Dendritic cell treated with granulocyte-macrophage colony-stimulating factor and Interleukin-4, amounts not matched to agents 40 ng/mL and 50 ng/mL, for 4 days (primary cell): ENCODE measurements at regions of chr1 and their contacts with region 1.

Region 1: DNA sequence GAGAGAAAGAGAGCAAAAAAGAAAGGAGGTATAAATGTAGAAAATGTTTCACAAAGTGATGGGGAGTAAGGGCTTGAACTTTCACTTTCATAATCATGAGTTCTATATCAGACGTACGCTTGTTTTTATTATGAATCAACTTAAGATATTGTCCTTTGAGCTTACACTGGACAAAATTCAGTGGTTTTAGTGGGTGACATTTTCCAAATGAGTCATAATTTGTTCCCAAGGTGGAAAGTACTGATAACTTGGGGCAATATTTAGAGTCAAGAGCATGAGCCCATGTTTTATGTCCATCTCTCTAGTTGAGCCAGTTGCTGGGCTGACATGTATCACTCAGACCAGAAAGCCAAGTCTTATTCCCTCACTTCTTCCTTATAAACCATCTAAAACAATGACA is 161.6 kb downstream of the CHRM3 start:
- H3K4me3 Mint-ChIP-seq: peak overlapping the region; percentile 40
- H3K27ac Mint-ChIP-seq: no peak overlapping the region
- H3K4me1 Mint-ChIP-seq: peaks cover 7% of the 10 kb centered on the region
- H3K27me3 Mint-ChIP-seq: no peaks in the 10 kb centered on the region

Region 2: GRCh38 chr1:239527051-239527693 is 20.8 kb before region 1 on chr1:
- intact Hi-C with region 1: loop called (anchors 1 kb)
- H3K4me3 Mint-ChIP-seq: no peak overlapping the region
- H3K27ac Mint-ChIP-seq: no peak overlapping the region
- H3K4me1 Mint-ChIP-seq: peaks cover under 1% of the 10 kb centered on the region
- H3K27me3 Mint-ChIP-seq: no peaks in the 10 kb centered on the region

Region 3: GRCh38 chr1:239778221-239778813 is 230.3 kb after region 1 on chr1:
- intact Hi-C with region 1: no loop called
- H3K4me3 Mint-ChIP-seq: no peak overlapping the region
- H3K27ac Mint-ChIP-seq: no peak overlapping the region
- H3K4me1 Mint-ChIP-seq: no peaks in the 10 kb centered on the region
- H3K27me3 Mint-ChIP-seq: no peaks in the 10 kb centered on the region